Activated CD8-positive, alpha-beta memory T cell treated with anti-CD3 and anti-CD28 coated beads, Interleukin-2, amount 10 ng/mL, durations not matched to agents 7 days and 5 days (primary cell): ENCODE measurements at regions of chr2 and their contacts with region 1.

Region 1: GRCh38 chr2:231563378-231563961 is 29.2 kb upstream of the TEX44 start:
- DNase-seq: peak; percentile 58
- ATAC-seq: peak; percentile 84
- H3K4me3 Mint-ChIP-seq: no peak overlapping the region
- H3K27ac Mint-ChIP-seq: no peak overlapping the region
- H3K4me1 Mint-ChIP-seq: peaks cover 4% of the 10 kb centered on the region
- H3K27me3 Mint-ChIP-seq: peaks cover 2% of the 10 kb centered on the region

Region 2: GRCh38 chr2:231522799-231523180 is 40.7 kb before region 1 on chr2:
- CTCF ChIA-PET with region 1: interaction called, 95 read pairs
- DNase-seq: no peak
- ATAC-seq: no peak
- H3K4me3 Mint-ChIP-seq: no peak overlapping the region
- H3K27ac Mint-ChIP-seq: no peak overlapping the region
- H3K4me1 Mint-ChIP-seq: peaks cover 62% of the 10 kb centered on the region
- H3K27me3 Mint-ChIP-seq: peaks cover 19% of the 10 kb centered on the region

Region 3: DNA sequence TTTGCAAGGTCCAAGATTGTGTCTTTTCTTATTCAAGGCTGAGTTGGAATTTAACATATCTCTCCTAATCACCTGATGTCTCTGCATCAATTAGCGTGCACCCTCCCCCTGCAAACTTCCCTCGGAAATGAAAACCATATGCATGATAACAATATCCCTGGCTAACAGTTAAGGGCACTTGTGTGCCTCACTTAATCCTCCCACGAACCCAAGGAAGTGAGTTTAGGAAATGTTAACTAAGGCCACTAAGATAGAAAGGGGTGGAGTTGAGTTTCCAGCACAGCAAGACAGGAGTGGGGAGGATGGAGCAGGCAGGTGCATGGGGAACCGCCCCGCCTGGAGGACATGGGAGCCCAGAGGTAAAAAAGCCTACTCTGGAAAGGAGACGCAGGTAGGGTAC is 92.4 kb after region 1 on chr2:
- CTCF ChIA-PET with region 1: no interaction called
- DNase-seq: no peak
- ATAC-seq: no peak
- H3K4me3 Mint-ChIP-seq: no peak overlapping the region
- H3K27ac Mint-ChIP-seq: no peak overlapping the region
- H3K4me1 Mint-ChIP-seq: no peaks in the 10 kb centered on the region
- H3K27me3 Mint-ChIP-seq: no peaks in the 10 kb centered on the region